ENCODE measurements at regions of chr3 and their contacts with region 1.

Region 1: GRCh38 chr3:101724329-101725193 is at the start of gene CEP97:
- DNase-seq: peak; percentile 85
- H3K4me3 Mint-ChIP-seq: peak within 1 kb of the TSS; percentile 96
- H3K27ac Mint-ChIP-seq: peak within 1 kb of the TSS; percentile 98
- H3K4me1 Mint-ChIP-seq: peaks cover 40% of the 10 kb centered on the region
- H3K27me3 Mint-ChIP-seq: no peaks in the 10 kb centered on the region
- total RNA-seq, gene CEP97: 26.0 and 26.1 TPM in 2 replicates

Region 2: GRCh38 chr3:101561630-101562328 is 162.8 kb before region 1 on chr3 and contains the start of gene TRMT10C:
- intact Hi-C with region 1: loop called (anchors 1 kb)
- DNase-seq: peak; percentile 89
- H3K4me3 Mint-ChIP-seq: peak within 1 kb of the TSS; percentile 97
- H3K27ac Mint-ChIP-seq: peak within 1 kb of the TSS; percentile 97
- H3K4me1 Mint-ChIP-seq: peaks cover 26% of the 10 kb centered on the region
- H3K27me3 Mint-ChIP-seq: peaks cover 1% of the 10 kb centered on the region
- total RNA-seq, gene TRMT10C: 47.1 and 54.0 TPM in 2 replicates

Region 3: GRCh38 chr3:101573449-101574387 is 150.8 kb before region 1 on chr3 and contains the start of gene PCNP:
- intact Hi-C with region 1: loop called (anchors 1 kb)
- DNase-seq: peak; percentile 99
- H3K4me3 Mint-ChIP-seq: peak within 1 kb of the TSS; percentile 96
- H3K27ac Mint-ChIP-seq: peak within 1 kb of the TSS; percentile 99
- H3K4me1 Mint-ChIP-seq: peaks cover 56% of the 10 kb centered on the region
- H3K27me3 Mint-ChIP-seq: no peaks in the 10 kb centered on the region
- total RNA-seq, gene PCNP: 190 and 192 TPM in 2 replicates

Region 4: GRCh38 chr3:101676765-101677435 is 47.7 kb before region 1 on chr3 and contains the start of gene ZBTB11:
- intact Hi-C with region 1: loop called (anchors 1 kb)
- DNase-seq: peak; percentile 99
- H3K4me3 Mint-ChIP-seq: peak within 1 kb of the TSS; percentile 94
- H3K27ac Mint-ChIP-seq: peak within 1 kb of the TSS; percentile 94
- H3K4me1 Mint-ChIP-seq: peaks cover 46% of the 10 kb centered on the region
- H3K27me3 Mint-ChIP-seq: no peaks in the 10 kb centered on the region
- total RNA-seq, gene ZBTB11: 27.5 and 29.6 TPM in 2 replicates

Region 5: DNA sequence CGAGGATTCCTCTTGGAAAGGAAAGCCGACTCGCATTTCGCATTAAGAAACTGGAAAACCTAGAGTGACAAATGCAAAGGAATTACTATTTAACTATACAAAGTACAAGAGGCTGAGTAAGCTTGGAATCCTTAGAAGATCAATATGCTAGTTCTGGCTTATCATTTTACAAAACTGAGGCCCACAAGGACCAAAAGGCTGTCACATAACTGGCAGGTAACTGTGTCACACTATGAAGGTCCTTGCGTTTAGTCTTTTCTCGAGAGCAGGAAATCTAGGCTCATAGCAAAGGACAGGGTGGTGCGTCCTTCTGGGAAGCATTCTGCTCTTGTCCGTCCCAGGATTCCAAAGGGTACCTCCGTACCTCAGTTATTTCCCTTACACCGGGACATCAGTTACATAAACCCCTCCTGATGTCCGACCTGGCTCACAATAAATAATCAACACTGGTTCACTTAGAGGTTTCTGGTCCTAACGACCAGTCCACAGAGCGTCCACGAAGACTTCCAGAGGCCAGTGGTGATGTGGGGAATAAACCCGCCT is 38.6 kb before region 1 on chr3:
- intact Hi-C with region 1: loop called (anchors 1 kb)
- DNase-seq: peak; percentile 31
- H3K4me3 Mint-ChIP-seq: peak overlapping the region; percentile 99
- H3K27ac Mint-ChIP-seq: peak overlapping the region; percentile 98
- H3K4me1 Mint-ChIP-seq: peaks cover 30% of the 10 kb centered on the region
- H3K27me3 Mint-ChIP-seq: no peaks in the 10 kb centered on the region

Region 6: DNA sequence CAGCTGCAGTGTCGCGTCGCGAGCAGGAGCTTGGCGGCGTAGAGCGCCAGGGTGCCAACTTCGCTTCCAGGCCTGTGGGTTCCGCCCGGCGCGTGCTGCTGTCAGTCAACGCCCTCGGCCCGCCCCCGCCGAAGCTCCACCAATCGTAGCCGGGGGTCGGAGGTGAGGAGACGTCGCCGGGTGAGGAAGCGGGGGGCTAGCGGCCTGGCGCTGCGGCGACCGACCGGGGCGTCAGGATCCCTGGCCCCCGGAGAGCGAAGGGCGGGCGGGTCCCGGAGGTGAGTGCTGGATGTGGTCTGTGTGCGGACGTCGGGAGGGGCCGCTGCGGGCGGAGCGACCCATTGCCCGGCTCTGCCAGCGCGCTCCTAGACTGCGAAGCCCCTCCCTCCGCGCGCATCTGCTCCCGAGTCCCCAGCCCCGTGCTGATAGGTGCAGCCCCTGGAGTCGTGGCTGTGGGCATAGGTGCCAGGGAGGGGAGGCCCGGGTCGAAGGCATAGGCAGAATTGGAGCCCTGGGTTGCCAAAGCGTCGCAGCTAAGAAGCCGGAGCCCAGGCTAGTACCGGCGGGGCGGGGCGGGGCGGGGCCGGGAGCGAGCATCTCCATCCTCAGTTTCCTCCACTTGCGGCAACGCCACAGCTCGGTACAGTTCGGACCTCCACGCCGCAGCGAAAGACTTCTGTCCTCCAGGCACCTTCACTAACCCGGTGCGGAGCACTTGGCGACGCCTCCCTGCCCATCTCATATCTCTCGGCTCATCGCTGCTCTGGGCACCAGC is 54.7 kb after region 1 on chr3 and contains the start of gene NXPE3:
- intact Hi-C with region 1: loop called (anchors 1 kb)
- DNase-seq: peak; percentile 90
- H3K4me3 Mint-ChIP-seq: peak within 1 kb of the TSS; percentile 95
- H3K27ac Mint-ChIP-seq: peak within 1 kb of the TSS; percentile 89
- H3K4me1 Mint-ChIP-seq: peaks cover 40% of the 10 kb centered on the region
- H3K27me3 Mint-ChIP-seq: no peaks in the 10 kb centered on the region
- total RNA-seq, gene NXPE3: 18.1 and 21.2 TPM in 2 replicates

Region 7: DNA sequence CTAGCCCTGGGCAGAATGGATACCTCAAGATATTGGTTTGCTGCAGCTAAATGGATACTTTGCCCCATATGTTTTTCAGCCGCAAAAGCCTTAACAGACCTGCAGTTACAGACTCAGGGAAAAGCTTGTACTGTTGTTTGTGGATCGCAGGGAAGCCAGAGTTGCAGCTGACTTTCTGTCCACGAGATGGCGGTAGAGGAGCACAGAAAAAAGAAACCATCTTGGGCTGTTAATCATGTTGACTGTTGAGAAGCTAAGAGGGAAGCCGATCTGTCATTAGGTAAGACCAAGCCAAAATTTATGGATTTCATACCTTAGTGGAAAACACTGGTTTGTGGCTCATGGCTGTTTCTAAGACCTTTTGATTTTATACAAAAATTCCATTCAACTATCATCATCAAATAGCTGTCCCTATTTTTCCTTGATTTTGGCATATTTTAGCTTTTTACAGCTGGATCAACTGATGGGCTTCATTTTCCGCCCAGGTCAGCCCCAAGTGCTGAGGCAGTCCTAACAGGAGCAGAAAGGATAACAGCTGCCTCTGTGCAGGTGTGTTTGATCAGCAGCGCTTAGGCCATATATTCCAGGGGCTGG is 504.6 kb after region 1 on chr3:
- intact Hi-C with region 1: loop called (anchors 10 kb)
- DNase-seq: peak; percentile 62
- H3K4me3 Mint-ChIP-seq: no peak overlapping the region
- H3K27ac Mint-ChIP-seq: no peak overlapping the region
- H3K4me1 Mint-ChIP-seq: peaks cover 23% of the 10 kb centered on the region
- H3K27me3 Mint-ChIP-seq: peaks cover 23% of the 10 kb centered on the region

Measured in activated T-helper 2 cell treated with anti-CD3 and anti-CD28 coated beads, Interferon-gamma antibody, Interleukin-2, Interleukin-4, amounts not matched to agents 10 μg/mL and 5 μg/mL and 100 μg/mL, durations not matched to agents 14 hours and 24 hours and 36 hours (primary cell).